ENCODE measurements at regions of chr3 and their contacts with region 1.

Region 1: GRCh38 chr3:132416807-132417694 is at the start of gene DNAJC13:
- DNase-seq: peak; percentile 98
- H3K4me3 ChIP-seq: peak within 1 kb of the TSS; percentile 82 to 100 (median 96)
- H3K27ac ChIP-seq: peak within 1 kb of the TSS; percentile 90 to 93 (median 91)
- H3K4me1 ChIP-seq: peaks cover 18 to 40% (median 29%) of the 10 kb centered on the region in 4 donors
- H3K27me3 ChIP-seq: no peaks in the 10 kb centered on the region
- CTCF ChIP-seq: no peak
- EP300 ChIP-seq: no peak
- POLR2A ChIP-seq: no peak
- total RNA-seq, gene DNAJC13: 43.1 to 52.4 (median 48.8) TPM

Region 2: DNA sequence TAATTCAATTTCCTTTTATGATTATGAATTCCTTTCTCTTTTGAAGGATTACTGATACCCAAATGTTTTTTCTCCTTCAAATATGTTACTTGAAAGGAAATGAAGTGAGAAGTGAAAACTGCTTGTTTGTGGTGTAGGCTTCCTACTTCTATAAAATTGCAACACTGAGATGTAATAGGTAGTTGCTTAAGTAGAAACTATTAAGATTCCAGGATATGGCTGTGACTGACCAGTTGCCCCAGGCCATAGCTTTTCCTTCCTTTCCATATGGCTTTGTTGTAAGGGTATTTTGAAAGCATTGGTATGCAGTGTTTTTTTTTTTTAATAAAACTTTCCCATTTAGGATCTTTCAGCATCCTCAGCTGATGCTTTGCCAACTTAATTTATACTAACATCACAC is 28.8 kb after region 1 on chr3:
- intact Hi-C with region 1: loop called (anchors 5 kb)
- DNase-seq: no peak
- H3K4me3 ChIP-seq: no peak overlapping the region
- H3K27ac ChIP-seq: no peak overlapping the region
- H3K4me1 ChIP-seq: peaks cover 29 to 57% (median 49%) of the 10 kb centered on the region in 4 donors
- H3K27me3 ChIP-seq: no peaks in the 10 kb centered on the region
- CTCF ChIP-seq: no peak
- EP300 ChIP-seq: no peak
- POLR2A ChIP-seq: no peak

Region 3: GRCh38 chr3:132587401-132587800 is 170.3 kb after region 1 on chr3:
- intact Hi-C with region 1: no loop called
- DNase-seq: no peak
- H3K4me3 ChIP-seq: no peak overlapping the region
- H3K27ac ChIP-seq: no peak overlapping the region
- H3K4me1 ChIP-seq: no peaks in the 10 kb centered on the region
- H3K27me3 ChIP-seq: no peaks in the 10 kb centered on the region
- CTCF ChIP-seq: no peak
- EP300 ChIP-seq: no peak
- POLR2A ChIP-seq: no peak